Caco-2 (cell line): ENCODE measurements at regions of chr1 and their contacts with region 1.

Region 1: GRCh38 chr1:117590271-117590925 is 15.4 kb upstream of the TENT5C start:
- DNase-seq: peak in 1 of 2 experiments; percentile 24
- H3K4me3 ChIP-seq: no peak overlapping the region
- H3K4me3 Mint-ChIP-seq: no peak overlapping the region
- H3K27ac Mint-ChIP-seq: no peak overlapping the region
- H3K4me1 ChIP-seq: peaks cover 10% of the 10 kb centered on the region; the same call in 1 of the 2 replicates
- H3K4me1 Mint-ChIP-seq: peaks cover 8% of the 10 kb centered on the region
- H3K27me3 ChIP-seq: no peaks in the 10 kb centered on the region
- H3K27me3 Mint-ChIP-seq: no peaks in the 10 kb centered on the region
- CTCF ChIP-seq: no peak

Region 2: DNA sequence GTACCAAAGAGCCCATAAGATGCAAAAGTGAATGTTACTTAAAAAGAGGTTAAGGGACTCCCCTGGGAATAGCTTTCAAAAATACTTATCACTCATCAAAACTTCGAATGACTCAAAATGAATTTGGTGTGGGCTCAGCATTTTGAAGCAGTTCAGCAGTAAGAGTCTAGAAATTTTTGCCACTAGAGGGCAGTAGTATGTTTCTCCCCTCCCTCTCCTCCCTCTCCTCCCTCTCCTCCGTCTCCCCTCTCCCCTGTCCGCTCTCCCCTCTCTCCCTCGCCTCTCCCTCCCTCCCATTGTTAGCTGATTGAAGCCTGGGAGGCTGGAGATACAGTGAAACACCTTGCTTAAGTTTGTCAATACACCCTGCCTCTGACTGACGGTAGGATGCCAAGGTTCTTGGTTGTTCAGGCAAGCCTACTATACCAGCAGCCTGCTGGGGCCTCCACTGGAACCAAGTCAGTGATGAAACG is 55.4 kb before region 1 on chr1:
- CTCF ChIA-PET with region 1: interaction called, 3 read pairs
- POLR2A ChIA-PET with region 1: no interaction called
- intact Hi-C with region 1: loop called (anchors 1 kb)
- DNase-seq: peak; percentile 52 to 60
- H3K4me3 ChIP-seq: no peak overlapping the region
- H3K4me3 Mint-ChIP-seq: no peak overlapping the region
- H3K27ac Mint-ChIP-seq: no peak overlapping the region
- H3K4me1 ChIP-seq: no peaks in the 10 kb centered on the region
- H3K4me1 Mint-ChIP-seq: no peaks in the 10 kb centered on the region
- H3K27me3 ChIP-seq: no peaks in the 10 kb centered on the region
- H3K27me3 Mint-ChIP-seq: no peaks in the 10 kb centered on the region
- CTCF ChIP-seq: peak; percentile 28 to 40

Region 3: DNA sequence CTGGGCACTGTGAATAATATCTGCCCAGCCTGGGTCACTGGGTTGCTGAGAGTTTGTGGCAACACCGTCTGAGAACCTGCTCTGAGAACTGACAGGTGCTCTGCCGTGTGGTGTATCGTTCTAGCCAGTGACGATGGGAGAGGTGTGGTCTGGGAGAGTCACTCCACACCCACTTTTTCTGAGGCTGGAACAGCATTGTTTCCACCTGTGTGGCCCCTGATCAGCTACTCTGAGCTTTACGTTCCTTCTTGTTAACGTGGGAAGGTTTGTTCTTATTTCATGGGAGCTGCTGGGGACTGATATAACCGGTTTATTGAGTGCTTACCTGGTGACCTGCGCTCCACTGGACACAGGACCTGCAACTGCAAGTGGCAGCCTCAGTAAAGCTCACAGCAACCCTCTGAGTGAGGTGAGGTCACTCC is 19.4 kb before region 1 on chr1:
- CTCF ChIA-PET with region 1: no interaction called
- POLR2A ChIA-PET with region 1: no interaction called
- intact Hi-C with region 1: loop called (anchors 2 kb)
- DNase-seq: peak; percentile 53
- H3K4me3 ChIP-seq: no peak overlapping the region
- H3K4me3 Mint-ChIP-seq: peak overlapping the region; percentile 42
- H3K27ac Mint-ChIP-seq: no peak overlapping the region
- H3K4me1 ChIP-seq: peaks cover 11% of the 10 kb centered on the region; the same call in 1 of the 2 replicates
- H3K4me1 Mint-ChIP-seq: peaks cover 12% of the 10 kb centered on the region
- H3K27me3 ChIP-seq: no peaks in the 10 kb centered on the region
- H3K27me3 Mint-ChIP-seq: no peaks in the 10 kb centered on the region
- CTCF ChIP-seq: no peak

Region 4: GRCh38 chr1:117821782-117822447 is 231.5 kb after region 1 on chr1:
- CTCF ChIA-PET with region 1: no interaction called
- POLR2A ChIA-PET with region 1: no interaction called
- intact Hi-C with region 1: no loop called
- DNase-seq: no peak
- H3K4me3 ChIP-seq: no peak overlapping the region
- H3K4me3 Mint-ChIP-seq: no peak overlapping the region
- H3K27ac Mint-ChIP-seq: no peak overlapping the region
- H3K4me1 ChIP-seq: no peaks in the 10 kb centered on the region
- H3K4me1 Mint-ChIP-seq: no peaks in the 10 kb centered on the region
- H3K27me3 ChIP-seq: no peaks in the 10 kb centered on the region
- H3K27me3 Mint-ChIP-seq: no peaks in the 10 kb centered on the region
- CTCF ChIP-seq: no peak